ENCODE measurements at regions of chr6 and their contacts with region 1.

Region 1: DNA sequence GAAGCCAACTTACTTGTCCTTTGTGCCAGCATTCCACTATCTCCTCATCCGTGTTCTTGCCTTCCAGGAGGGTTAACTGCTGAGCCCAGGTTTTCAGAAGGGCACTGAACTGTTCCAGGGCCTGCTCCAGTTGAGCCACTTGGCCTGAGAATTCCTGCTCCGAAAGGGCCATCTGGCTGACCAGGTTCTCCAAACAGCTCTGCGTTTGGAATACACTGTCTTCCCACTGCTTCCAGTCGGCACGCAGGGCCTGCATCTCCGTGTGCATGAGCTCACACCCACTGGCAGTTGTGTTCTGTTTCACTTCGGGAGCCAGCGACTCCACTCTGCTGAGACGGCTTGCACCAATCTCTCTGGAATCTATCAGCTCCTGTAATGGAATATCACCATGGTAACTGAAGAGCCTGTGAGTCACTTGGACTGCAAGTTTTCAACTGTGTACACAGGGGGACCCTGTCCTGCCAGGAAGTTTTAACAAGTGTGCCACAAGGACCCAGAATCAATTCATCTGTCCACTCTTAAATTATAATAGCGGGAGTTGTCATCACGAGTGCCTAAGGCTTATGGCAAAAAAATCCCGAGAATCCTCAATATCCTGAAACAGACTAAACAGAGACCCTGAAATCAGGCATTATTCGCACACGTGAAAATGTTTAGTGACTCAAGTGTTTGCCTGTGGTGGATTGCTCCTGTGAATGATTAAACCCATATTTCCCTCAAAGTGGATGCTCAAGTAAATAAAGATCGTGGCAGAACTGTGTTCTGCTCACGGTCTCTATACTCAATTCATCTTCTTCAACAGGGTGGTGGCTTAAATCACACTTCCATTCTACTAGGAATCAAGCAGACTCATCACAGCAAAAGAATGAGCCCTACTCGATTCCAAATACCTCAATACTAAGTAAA is 255.9 kb downstream of the SYNE1 start:
- DNase-seq: peak; percentile 36 to 94
- H3K4me3 ChIP-seq: peak overlapping the region; percentile 65 to 71
- H3K27ac ChIP-seq: peak overlapping the region; percentile 93 to 94
- H3K4me1 ChIP-seq: peaks cover 0 to 18% of the 10 kb centered on the region in 2 donors
- H3K27me3 ChIP-seq: no peaks in the 10 kb centered on the region
- CTCF ChIP-seq: peak in 1 of 3 experiments; percentile 3

Region 2: DNA sequence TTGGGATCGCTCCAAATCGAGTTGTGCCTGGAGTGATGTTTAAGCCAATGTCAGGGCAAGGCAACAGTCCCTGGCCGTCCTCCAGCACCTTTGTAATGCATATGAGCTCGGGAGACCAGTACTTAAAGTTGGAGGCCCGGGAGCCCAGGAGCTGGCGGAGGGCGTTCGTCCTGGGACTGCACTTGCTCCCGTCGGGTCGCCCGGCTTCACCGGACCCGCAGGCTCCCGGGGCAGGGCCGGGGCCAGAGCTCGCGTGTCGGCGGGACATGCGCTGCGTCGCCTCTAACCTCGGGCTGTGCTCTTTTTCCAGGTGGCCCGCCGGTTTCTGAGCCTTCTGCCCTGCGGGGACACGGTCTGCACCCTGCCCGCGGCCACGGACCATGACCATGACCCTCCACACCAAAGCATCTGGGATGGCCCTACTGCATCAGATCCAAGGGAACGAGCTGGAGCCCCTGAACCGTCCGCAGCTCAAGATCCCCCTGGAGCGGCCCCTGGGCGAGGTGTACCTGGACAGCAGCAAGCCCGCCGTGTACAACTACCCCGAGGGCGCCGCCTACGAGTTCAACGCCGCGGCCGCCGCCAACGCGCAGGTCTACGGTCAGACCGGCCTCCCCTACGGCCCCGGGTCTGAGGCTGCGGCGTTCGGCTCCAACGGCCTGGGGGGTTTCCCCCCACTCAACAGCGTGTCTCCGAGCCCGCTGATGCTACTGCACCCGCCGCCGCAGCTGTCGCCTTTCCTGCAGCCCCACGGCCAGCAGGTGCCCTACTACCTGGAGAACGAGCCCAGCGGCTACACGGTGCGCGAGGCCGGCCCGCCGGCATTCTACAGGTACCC is 573.5 kb before region 1 on chr6 and contains the start of gene ESR1:
- intact Hi-C with region 1: loop called (anchors 5 kb)
- DNase-seq: no peak
- H3K4me3 ChIP-seq: peak within 1 kb of the TSS; percentile 64 to 75
- H3K27ac ChIP-seq: peak within 1 kb of the TSS; percentile 36 to 58
- H3K4me1 ChIP-seq: peaks cover 7 to 21% of the 10 kb centered on the region in 2 donors
- H3K27me3 ChIP-seq: no peaks in the 10 kb centered on the region
- CTCF ChIP-seq: no peak
- total RNA-seq, gene ESR1: 3.0 TPM

Region 3: GRCh38 chr6:152338335-152339125 is 42.7 kb before region 1 on chr6:
- intact Hi-C with region 1: no loop called
- DNase-seq: peak in 1 of 2 donors; percentile 75
- H3K4me3 ChIP-seq: no peak overlapping the region
- H3K27ac ChIP-seq: peak overlapping the region; percentile 20 to 56
- H3K4me1 ChIP-seq: no peaks in the 10 kb centered on the region
- H3K27me3 ChIP-seq: no peaks in the 10 kb centered on the region
- CTCF ChIP-seq: peak; percentile 62 to 95 (median 89)

Region 4: GRCh38 chr6:152401978-152402377 is 20.7 kb after region 1 on chr6:
- intact Hi-C with region 1: loop called (anchors 1 kb)
- DNase-seq: peak in 1 of 2 donors; percentile 66
- H3K4me3 ChIP-seq: no peak overlapping the region
- H3K27ac ChIP-seq: peak overlapping the region; percentile 76 to 92
- H3K4me1 ChIP-seq: peaks cover 5 to 25% of the 10 kb centered on the region in 2 donors
- H3K27me3 ChIP-seq: no peaks in the 10 kb centered on the region
- CTCF ChIP-seq: no peak

Region 5: GRCh38 chr6:152471456-152472265 is 90.4 kb after region 1 on chr6:
- intact Hi-C with region 1: loop called (anchors 5 kb)
- DNase-seq: no peak
- H3K4me3 ChIP-seq: peak overlapping the region; percentile 0 to 59
- H3K27ac ChIP-seq: peak overlapping the region in 1 of 2 donors; percentile 45
- H3K4me1 ChIP-seq: peaks cover 0 to 4% of the 10 kb centered on the region in 2 donors
- H3K27me3 ChIP-seq: no peaks in the 10 kb centered on the region
- CTCF ChIP-seq: no peak

Region 6: GRCh38 chr6:152982768-152983636 is 601.8 kb after region 1 on chr6 and contains the start of gene FBXO5:
- intact Hi-C with region 1: loop called (anchors 10 kb)
- DNase-seq: peak; percentile 92 to 99
- H3K4me3 ChIP-seq: peak within 1 kb of the TSS; percentile 63 to 93
- H3K27ac ChIP-seq: peak within 1 kb of the TSS; percentile 85 to 90
- H3K4me1 ChIP-seq: peaks cover 12 to 13% of the 10 kb centered on the region in 2 donors
- H3K27me3 ChIP-seq: no peaks in the 10 kb centered on the region
- CTCF ChIP-seq: no peak
- total RNA-seq, gene FBXO5: not detected